CD8-positive, alpha-beta T cell (primary cell): ENCODE measurements at regions of chr17 and their contacts with region 1.

Region 1: GRCh38 chr17:46108550-46109110 is 84.6 kb downstream of the KANSL1 start:
- DNase-seq: peak in 1 of 9 experiments; percentile 18
- ATAC-seq: peak; percentile 48
- H3K4me3 ChIP-seq: no peak overlapping the region
- H3K4me3 Mint-ChIP-seq: peak overlapping the region; percentile 16
- H3K27ac ChIP-seq: no peak overlapping the region
- H3K27ac Mint-ChIP-seq: peak overlapping the region; percentile 66
- H3K4me1 ChIP-seq: peaks cover 48% of the 10 kb centered on the region
- H3K4me1 Mint-ChIP-seq: peaks cover 90% of the 10 kb centered on the region
- H3K27me3 ChIP-seq: no peaks in the 10 kb centered on the region
- H3K27me3 Mint-ChIP-seq: no peaks in the 10 kb centered on the region
- CTCF ChIP-seq: no peak

Region 2: GRCh38 chr17:45942284-45942683 is 166.3 kb before region 1 on chr17:
- CTCF ChIA-PET with region 1: no interaction called
- POLR2A ChIA-PET with region 1: no interaction called
- intact Hi-C with region 1: no loop called
- DNase-seq: no peak
- ATAC-seq: no peak
- H3K4me3 ChIP-seq: no peak overlapping the region
- H3K4me3 Mint-ChIP-seq: no peak overlapping the region
- H3K27ac ChIP-seq: no peak overlapping the region
- H3K27ac Mint-ChIP-seq: no peak overlapping the region
- H3K4me1 ChIP-seq: no peaks in the 10 kb centered on the region
- H3K4me1 Mint-ChIP-seq: peaks cover 8% of the 10 kb centered on the region
- H3K27me3 ChIP-seq: no peaks in the 10 kb centered on the region
- H3K27me3 Mint-ChIP-seq: peaks cover 16% of the 10 kb centered on the region
- CTCF ChIP-seq: no peak

Region 3: DNA sequence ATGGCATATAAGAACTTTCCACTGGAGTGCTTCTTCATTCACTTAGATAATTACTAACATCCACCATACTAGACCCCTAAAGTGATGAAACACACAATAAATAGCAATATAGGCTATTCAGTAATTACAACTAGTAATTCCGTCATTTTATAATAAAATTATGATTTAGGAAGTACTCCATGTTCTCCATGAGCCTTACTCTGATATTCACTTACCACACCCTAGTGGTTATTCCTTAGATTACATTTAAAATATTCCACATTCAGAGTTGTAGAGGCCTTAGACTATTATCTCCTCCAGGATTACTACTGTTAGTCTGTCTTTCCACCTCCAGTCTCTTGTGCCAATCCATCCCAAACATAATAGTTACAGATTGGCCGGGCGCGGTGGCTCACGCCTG is 47.2 kb before region 1 on chr17:
- CTCF ChIA-PET with region 1: no interaction called
- POLR2A ChIA-PET with region 1: no interaction called
- intact Hi-C with region 1: no loop called
- DNase-seq: peak in 1 of 9 experiments; percentile 25
- ATAC-seq: no peak
- H3K4me3 ChIP-seq: no peak overlapping the region
- H3K4me3 Mint-ChIP-seq: no peak overlapping the region
- H3K27ac ChIP-seq: no peak overlapping the region
- H3K27ac Mint-ChIP-seq: no peak overlapping the region
- H3K4me1 ChIP-seq: no peaks in the 10 kb centered on the region
- H3K4me1 Mint-ChIP-seq: peaks cover 25% of the 10 kb centered on the region
- H3K27me3 ChIP-seq: no peaks in the 10 kb centered on the region
- H3K27me3 Mint-ChIP-seq: no peaks in the 10 kb centered on the region
- CTCF ChIP-seq: peak; percentile 51

Region 4: DNA sequence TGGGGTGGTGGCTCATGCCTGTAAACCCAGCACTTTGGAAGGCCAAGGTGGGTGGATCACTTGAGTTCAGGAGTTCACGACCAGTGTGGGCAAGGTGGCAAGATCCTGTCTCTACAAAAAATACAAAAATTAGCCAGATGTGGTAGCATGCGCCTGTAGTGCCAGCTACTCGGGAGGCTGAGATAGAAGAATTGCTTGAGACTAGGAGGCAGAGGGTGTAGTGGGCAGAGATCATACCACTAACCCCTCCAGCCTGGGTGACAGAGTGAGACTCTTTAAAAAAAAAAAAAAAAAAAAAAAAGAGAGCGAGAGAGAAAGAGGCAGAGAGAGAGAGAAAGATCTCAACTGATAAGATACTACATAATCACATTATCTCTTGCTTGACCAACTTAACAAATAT is 38.7 kb after region 1 on chr17:
- CTCF ChIA-PET with region 1: interaction called, 3 read pairs
- POLR2A ChIA-PET with region 1: no interaction called
- intact Hi-C with region 1: loop called in 1 of 2 experiments (anchors 5 kb)
- DNase-seq: peak in 3 of 9 experiments; percentile 26 to 51 (median 33)
- ATAC-seq: peak; percentile 54
- H3K4me3 ChIP-seq: no peak overlapping the region
- H3K4me3 Mint-ChIP-seq: peak overlapping the region; percentile 32
- H3K27ac ChIP-seq: no peak overlapping the region
- H3K27ac Mint-ChIP-seq: peak overlapping the region; percentile 74
- H3K4me1 ChIP-seq: peaks cover 73% of the 10 kb centered on the region
- H3K4me1 Mint-ChIP-seq: peaks cover 87% of the 10 kb centered on the region
- H3K27me3 ChIP-seq: no peaks in the 10 kb centered on the region
- H3K27me3 Mint-ChIP-seq: no peaks in the 10 kb centered on the region
- CTCF ChIP-seq: no peak

Region 5: DNA sequence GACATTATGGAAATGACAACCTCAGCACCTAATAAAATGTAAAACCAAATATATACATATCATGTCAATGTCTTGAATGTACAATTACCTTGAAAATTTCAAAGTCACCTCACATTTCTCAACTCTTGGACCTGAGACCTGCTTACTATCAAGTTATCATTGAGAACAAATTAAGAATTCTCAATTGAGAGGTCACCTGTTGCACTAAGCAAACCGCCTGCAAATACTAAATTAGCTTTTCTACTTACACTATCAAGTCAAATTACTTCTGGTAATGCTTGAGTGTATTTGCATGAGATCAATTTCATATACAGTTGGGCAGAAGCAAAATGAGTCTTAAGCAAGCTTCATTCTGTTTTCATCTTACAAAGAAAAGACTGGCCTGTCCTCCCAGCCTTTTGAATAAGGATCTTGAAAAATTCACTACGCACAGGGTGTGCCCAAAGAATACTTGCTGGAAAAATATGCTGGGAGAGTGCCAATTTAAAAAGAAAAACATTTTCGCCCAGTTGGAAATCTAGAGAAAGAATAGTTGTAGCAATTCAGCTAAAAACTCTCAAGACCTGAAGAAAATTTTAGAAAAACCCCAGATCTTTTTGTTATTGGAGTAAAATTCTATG is 48.9 kb after region 1 on chr17:
- CTCF ChIA-PET with region 1: no interaction called
- POLR2A ChIA-PET with region 1: no interaction called
- intact Hi-C with region 1: no loop called
- DNase-seq: no peak
- ATAC-seq: no peak
- H3K4me3 ChIP-seq: no peak overlapping the region
- H3K4me3 Mint-ChIP-seq: no peak overlapping the region
- H3K27ac ChIP-seq: no peak overlapping the region
- H3K27ac Mint-ChIP-seq: peak overlapping the region; percentile 66
- H3K4me1 ChIP-seq: peaks cover 94% of the 10 kb centered on the region
- H3K4me1 Mint-ChIP-seq: peaks cover 90% of the 10 kb centered on the region
- H3K27me3 ChIP-seq: no peaks in the 10 kb centered on the region
- H3K27me3 Mint-ChIP-seq: no peaks in the 10 kb centered on the region
- CTCF ChIP-seq: no peak